MCF 10A (cell line): ENCODE measurements at regions of chr7 and their contacts with region 1.

Region 1: GRCh38 chr7:106285051-106285854 is 470 bp upstream of the NAMPT start:
- DNase-seq: peak; percentile 99
- H3K4me3 Mint-ChIP-seq: peak overlapping the region; percentile 100
- H3K27ac Mint-ChIP-seq: peak overlapping the region; percentile 98
- H3K4me1 Mint-ChIP-seq: peaks cover 17% of the 10 kb centered on the region
- H3K27me3 Mint-ChIP-seq: no peaks in the 10 kb centered on the region
- CTCF ChIP-seq: no peak

Region 2: GRCh38 chr7:106056513-106057203 is 228.6 kb before region 1 on chr7:
- CTCF ChIA-PET with region 1: interaction called, 3 read pairs
- POLR2A ChIA-PET with region 1: interaction called, 3 read pairs
- intact Hi-C with region 1: loop called (anchors 5 kb)
- DNase-seq: peak; percentile 85
- H3K4me3 Mint-ChIP-seq: no peak overlapping the region
- H3K27ac Mint-ChIP-seq: no peak overlapping the region
- H3K4me1 Mint-ChIP-seq: peaks cover 21% of the 10 kb centered on the region
- H3K27me3 Mint-ChIP-seq: no peaks in the 10 kb centered on the region
- CTCF ChIP-seq: peak; percentile 94

Region 3: GRCh38 chr7:106216517-106216922 is 68.7 kb before region 1 on chr7:
- CTCF ChIA-PET with region 1: no interaction called
- POLR2A ChIA-PET with region 1: interaction called, 48 read pairs
- intact Hi-C with region 1: no loop called
- DNase-seq: peak; percentile 98
- H3K4me3 Mint-ChIP-seq: peak overlapping the region; percentile 66
- H3K27ac Mint-ChIP-seq: peak overlapping the region; percentile 82
- H3K4me1 Mint-ChIP-seq: peaks cover 36% of the 10 kb centered on the region
- H3K27me3 Mint-ChIP-seq: no peaks in the 10 kb centered on the region
- CTCF ChIP-seq: no peak

Region 4: GRCh38 chr7:106313456-106313901 is 28.2 kb after region 1 on chr7:
- CTCF ChIA-PET with region 1: interaction called, 3 read pairs
- POLR2A ChIA-PET with region 1: interaction called, 7 read pairs
- intact Hi-C with region 1: loop called (anchors 1 kb)
- DNase-seq: peak; percentile 27
- H3K4me3 Mint-ChIP-seq: no peak overlapping the region
- H3K27ac Mint-ChIP-seq: peak overlapping the region; percentile 81
- H3K4me1 Mint-ChIP-seq: peaks cover 29% of the 10 kb centered on the region
- H3K27me3 Mint-ChIP-seq: no peaks in the 10 kb centered on the region
- CTCF ChIP-seq: no peak

Region 5: DNA sequence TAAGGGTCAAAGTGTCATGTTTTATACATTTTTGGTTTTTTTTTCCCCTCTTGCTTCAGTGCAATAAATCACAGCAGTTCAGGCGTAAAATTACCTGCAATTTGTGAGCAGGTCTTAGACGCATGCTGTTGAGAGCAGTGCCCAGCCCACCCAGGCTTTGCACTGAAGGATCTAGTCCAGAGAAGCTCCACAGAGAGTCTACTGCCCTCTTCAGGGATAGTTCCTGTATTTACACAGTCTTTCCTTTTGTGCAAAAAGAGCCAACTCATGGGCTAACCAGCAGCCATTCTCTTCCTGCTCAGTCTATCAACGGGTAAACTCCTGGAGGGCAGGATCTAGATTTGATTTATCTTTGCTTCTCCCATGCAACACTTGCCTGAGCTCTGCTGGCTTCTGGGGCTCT is 81.8 kb after region 1 on chr7:
- CTCF ChIA-PET with region 1: no interaction called
- POLR2A ChIA-PET with region 1: no interaction called
- intact Hi-C with region 1: loop called (anchors 5 kb)
- DNase-seq: peak; percentile 46
- H3K4me3 Mint-ChIP-seq: no peak overlapping the region
- H3K27ac Mint-ChIP-seq: no peak overlapping the region
- H3K4me1 Mint-ChIP-seq: peaks cover 7% of the 10 kb centered on the region
- H3K27me3 Mint-ChIP-seq: no peaks in the 10 kb centered on the region
- CTCF ChIP-seq: peak; percentile 21

Region 6: DNA sequence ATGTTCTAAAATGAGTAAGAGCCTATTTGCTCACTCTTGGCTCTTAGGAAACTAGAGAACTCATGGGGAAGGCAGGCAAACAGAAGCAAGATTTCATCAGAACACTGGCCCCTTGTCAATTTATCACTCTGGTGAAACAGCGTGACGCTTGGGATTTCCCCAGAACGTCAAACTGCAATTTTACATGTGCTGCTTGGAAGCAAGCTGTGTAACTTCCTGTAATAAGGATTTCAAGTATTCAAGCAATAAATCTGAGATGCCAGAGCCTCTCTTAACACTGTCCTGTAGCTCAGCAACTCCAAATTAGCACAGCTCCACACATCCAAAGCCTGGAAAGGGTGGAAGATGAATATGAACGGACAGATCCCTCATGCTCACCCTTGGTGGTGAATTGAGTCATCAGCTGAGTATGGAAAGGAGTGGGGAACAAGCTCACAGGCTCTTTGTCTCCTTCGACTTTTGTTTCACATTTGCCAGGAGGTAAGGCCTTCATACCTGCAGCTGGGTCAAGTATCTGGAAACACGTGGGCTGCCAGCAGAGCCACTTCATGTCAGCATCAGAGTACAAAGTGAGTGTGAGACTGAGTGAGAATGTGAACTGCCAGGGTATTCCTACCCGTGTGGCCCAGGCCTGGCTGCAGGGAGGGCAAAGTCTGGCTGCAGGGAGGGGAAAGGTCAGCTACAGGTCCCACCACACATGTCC is 139.9 kb after region 1 on chr7:
- CTCF ChIA-PET with region 1: interaction called, 7 read pairs
- POLR2A ChIA-PET with region 1: interaction called, 94 read pairs
- intact Hi-C with region 1: loop called (anchors 1 kb)
- DNase-seq: peak; percentile 99
- H3K4me3 Mint-ChIP-seq: peak overlapping the region; percentile 68
- H3K27ac Mint-ChIP-seq: peak overlapping the region; percentile 91
- H3K4me1 Mint-ChIP-seq: peaks cover 53% of the 10 kb centered on the region
- H3K27me3 Mint-ChIP-seq: no peaks in the 10 kb centered on the region
- CTCF ChIP-seq: no peak

Region 7: DNA sequence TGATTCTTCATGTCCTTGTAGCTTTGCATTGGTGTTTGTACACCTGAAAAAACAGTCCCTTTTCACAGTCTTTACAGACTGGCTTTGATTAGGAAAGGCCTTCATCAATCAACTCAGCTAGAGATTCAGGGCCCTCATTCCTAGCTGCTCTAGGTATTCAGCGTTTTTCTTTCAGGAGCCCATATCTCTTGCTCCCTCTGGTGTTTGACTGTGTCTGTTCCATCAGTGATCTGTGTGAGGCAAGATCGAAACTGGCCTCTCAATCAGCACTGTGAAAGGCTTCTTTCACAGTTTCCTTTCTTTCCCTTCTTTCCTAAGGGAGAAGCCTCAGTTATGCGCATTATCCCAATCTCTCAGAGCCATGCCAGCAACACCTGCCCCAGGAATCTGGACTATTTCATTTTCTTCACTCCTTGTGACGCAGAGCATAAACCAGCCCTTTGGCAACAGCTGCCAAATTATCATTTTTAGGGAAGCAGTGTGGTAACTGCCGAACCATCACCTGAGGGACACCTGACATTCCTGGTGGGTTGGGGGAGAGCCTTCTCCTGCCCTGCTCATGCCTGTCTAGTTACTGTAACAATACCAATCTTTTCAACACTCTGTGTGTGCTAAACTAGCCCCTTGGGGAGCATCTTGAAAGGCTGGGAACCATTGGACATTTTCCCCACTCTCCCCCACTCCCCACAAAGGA is 451.4 kb after region 1 on chr7:
- CTCF ChIA-PET with region 1: no interaction called
- POLR2A ChIA-PET with region 1: no interaction called
- intact Hi-C with region 1: loop called (anchors 5 kb)
- DNase-seq: peak; percentile 84
- H3K4me3 Mint-ChIP-seq: peak overlapping the region; percentile 57
- H3K27ac Mint-ChIP-seq: peak overlapping the region; percentile 86
- H3K4me1 Mint-ChIP-seq: peaks cover 9% of the 10 kb centered on the region
- H3K27me3 Mint-ChIP-seq: no peaks in the 10 kb centered on the region
- CTCF ChIP-seq: peak; percentile 72

Region 8: DNA sequence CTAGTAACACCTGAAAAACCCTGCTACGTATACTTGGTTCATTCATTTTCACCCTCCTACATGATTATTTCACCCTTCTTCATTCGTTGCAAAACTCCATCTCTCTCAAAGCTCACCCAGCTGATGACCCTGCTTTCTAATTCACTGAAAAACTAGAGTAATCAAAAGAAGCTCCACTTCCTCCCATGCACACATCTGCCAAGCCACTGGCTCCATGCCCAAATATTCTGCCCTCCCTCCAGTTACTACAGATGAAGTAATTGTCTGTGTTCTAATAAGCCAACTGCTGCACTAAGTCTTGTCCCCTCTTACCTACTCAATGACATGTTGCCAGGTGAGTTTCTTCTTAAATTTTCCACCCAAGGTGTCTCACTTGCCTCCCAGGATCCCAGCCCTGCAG is 472.6 kb after region 1 on chr7:
- CTCF ChIA-PET with region 1: no interaction called
- POLR2A ChIA-PET with region 1: no interaction called
- intact Hi-C with region 1: no loop called
- DNase-seq: peak; percentile 44
- H3K4me3 Mint-ChIP-seq: no peak overlapping the region
- H3K27ac Mint-ChIP-seq: no peak overlapping the region
- H3K4me1 Mint-ChIP-seq: peaks cover 6% of the 10 kb centered on the region
- H3K27me3 Mint-ChIP-seq: no peaks in the 10 kb centered on the region
- CTCF ChIP-seq: no peak